Gastrocnemius medialis (tissue), 4 donors: ENCODE measurements at regions of chr1 and their contacts with region 1.

Region 1: GRCh38 chr1:66533804-66534740 is at the start of gene SGIP1:
- DNase-seq: peak; percentile 27 to 42
- ATAC-seq: peak; percentile 65 to 70
- H3K4me3 ChIP-seq: peak within 1 kb of the TSS; percentile 49 to 56 (median 52)
- H3K27ac ChIP-seq: peak within 1 kb of the TSS; percentile 64 to 78 (median 74)
- H3K4me1 ChIP-seq: peaks cover 0 to 4% of the 10 kb centered on the region in 2 donors
- H3K27me3 ChIP-seq: peaks cover 0 to 11% (median 10%) of the 10 kb centered on the region in 3 donors
- CTCF ChIP-seq: no peak
- POLR2A ChIP-seq: peak in 1 of 2 donors; percentile 49
- total RNA-seq, gene SGIP1: 2.5 to 7.1 (median 2.9) TPM

Region 2: DNA sequence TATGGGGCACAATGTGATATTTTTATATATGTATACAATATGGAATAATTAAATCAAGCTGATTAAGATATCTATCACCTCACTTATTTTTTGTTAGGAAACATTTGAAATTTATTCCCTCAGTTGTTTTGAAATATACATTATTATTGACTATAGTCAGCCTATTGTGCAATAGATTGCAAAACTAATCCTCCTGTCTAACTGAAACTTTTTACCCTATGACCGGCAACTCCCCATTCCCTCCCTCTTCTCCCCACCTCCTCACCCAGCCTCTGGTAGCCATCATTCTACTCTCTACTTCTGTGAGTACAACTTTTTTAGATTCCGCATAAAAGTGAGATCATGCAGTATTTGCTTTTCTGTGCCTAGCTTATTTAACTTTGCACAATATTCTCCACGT is 117.8 kb before region 1 on chr1:
- in situ Hi-C with region 1: no loop called
- intact Hi-C with region 1: no loop called
- DNase-seq: no peak
- ATAC-seq: no peak
- H3K4me3 ChIP-seq: no peak overlapping the region
- H3K27ac ChIP-seq: no peak overlapping the region
- H3K4me1 ChIP-seq: no peaks in the 10 kb centered on the region
- H3K27me3 ChIP-seq: no peaks in the 10 kb centered on the region
- CTCF ChIP-seq: no peak
- POLR2A ChIP-seq: no peak

Region 3: GRCh38 chr1:66436378-66437145 is 97.5 kb before region 1 on chr1:
- in situ Hi-C with region 1: no loop called
- intact Hi-C with region 1: no loop called
- DNase-seq: no peak
- ATAC-seq: no peak
- H3K4me3 ChIP-seq: no peak overlapping the region
- H3K27ac ChIP-seq: no peak overlapping the region
- H3K4me1 ChIP-seq: no peaks in the 10 kb centered on the region
- H3K27me3 ChIP-seq: no peaks in the 10 kb centered on the region
- CTCF ChIP-seq: no peak
- POLR2A ChIP-seq: no peak

Region 4: DNA sequence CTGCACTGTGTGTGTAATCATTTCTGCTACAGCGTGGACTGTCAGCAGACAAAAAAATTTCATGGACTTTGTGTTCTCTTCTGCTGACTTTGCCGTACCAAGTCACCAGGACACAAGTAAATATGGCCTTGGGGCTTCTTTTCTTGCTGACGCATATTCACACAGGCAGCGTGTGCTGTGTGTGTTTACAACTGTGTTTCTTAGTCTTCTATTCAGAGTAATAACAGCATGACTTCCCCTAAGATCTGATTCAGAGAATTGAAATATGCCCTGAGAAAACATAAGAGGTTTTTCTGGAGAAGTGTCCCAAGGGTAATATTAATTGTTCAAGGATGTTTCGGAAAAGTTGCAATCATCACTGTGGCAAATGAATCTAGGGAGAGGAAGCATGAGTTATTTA is 171.0 kb after region 1 on chr1:
- in situ Hi-C with region 1: no loop called
- intact Hi-C with region 1: loop called (anchors 10 kb)
- DNase-seq: no peak
- ATAC-seq: peak in 1 of 2 donors; percentile 33
- H3K4me3 ChIP-seq: no peak overlapping the region
- H3K27ac ChIP-seq: peak overlapping the region in 1 of 4 donors; percentile 24
- H3K4me1 ChIP-seq: no peaks in the 10 kb centered on the region
- H3K27me3 ChIP-seq: no peaks in the 10 kb centered on the region
- CTCF ChIP-seq: no peak
- POLR2A ChIP-seq: no peak